CD4-positive, alpha-beta T cell (primary cell): ENCODE measurements at regions of chr18 and their contacts with region 1.

Region 1: GRCh38 chr18:50586710-50587109 is 26.8 kb downstream of the MAPK4 start:
- DNase-seq: no peak
- ATAC-seq: no peak
- H3K4me3 ChIP-seq: no peak overlapping the region
- H3K4me3 Mint-ChIP-seq: no peak overlapping the region
- H3K27ac ChIP-seq: no peak overlapping the region
- H3K27ac Mint-ChIP-seq: no peak overlapping the region
- H3K4me1 ChIP-seq: no peaks in the 10 kb centered on the region
- H3K4me1 Mint-ChIP-seq: no peaks in the 10 kb centered on the region
- H3K27me3 ChIP-seq: no peaks in the 10 kb centered on the region
- H3K27me3 Mint-ChIP-seq: no peaks in the 10 kb centered on the region
- CTCF ChIP-seq: no peak

Region 2: GRCh38 chr18:49608366-49609255 is 978.1 kb before region 1 on chr18:
- CTCF ChIA-PET with region 1: no interaction called
- POLR2A ChIA-PET with region 1: no interaction called
- intact Hi-C with region 1: no loop called
- DNase-seq: no peak
- ATAC-seq: no peak
- H3K4me3 ChIP-seq: no peak overlapping the region
- H3K4me3 Mint-ChIP-seq: no peak overlapping the region
- H3K27ac ChIP-seq: no peak overlapping the region
- H3K27ac Mint-ChIP-seq: no peak overlapping the region
- H3K4me1 ChIP-seq: no peaks in the 10 kb centered on the region
- H3K4me1 Mint-ChIP-seq: no peaks in the 10 kb centered on the region
- H3K27me3 ChIP-seq: peaks cover 0 to 6% of the 10 kb centered on the region in 2 experiments
- H3K27me3 Mint-ChIP-seq: peaks cover 21% of the 10 kb centered on the region
- CTCF ChIP-seq: no peak

Region 3: DNA sequence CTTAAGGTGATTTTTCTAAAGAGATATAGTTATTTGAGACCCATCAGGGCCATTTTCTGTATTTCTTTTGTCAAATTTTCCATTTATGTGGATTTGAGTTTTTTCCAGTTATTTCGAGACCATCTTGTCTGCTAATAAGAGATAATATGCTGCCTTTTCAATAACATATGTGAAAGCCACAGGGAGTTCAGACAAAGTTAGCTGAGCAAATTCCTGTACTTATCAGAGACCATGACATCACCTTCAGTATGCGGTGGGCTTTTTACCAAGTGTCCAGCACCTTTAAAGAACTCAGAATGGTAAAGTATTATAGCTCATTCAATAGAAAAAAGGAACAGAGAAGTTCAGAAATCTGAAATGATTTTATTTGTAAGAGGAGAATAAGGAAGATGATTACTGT is 15.1 kb before region 1 on chr18:
- CTCF ChIA-PET with region 1: no interaction called
- POLR2A ChIA-PET with region 1: no interaction called
- intact Hi-C with region 1: loop called in 1 of 2 experiments (anchors 1 kb)
- DNase-seq: no peak
- ATAC-seq: no peak
- H3K4me3 ChIP-seq: no peak overlapping the region
- H3K4me3 Mint-ChIP-seq: no peak overlapping the region
- H3K27ac ChIP-seq: no peak overlapping the region
- H3K27ac Mint-ChIP-seq: no peak overlapping the region
- H3K4me1 ChIP-seq: no peaks in the 10 kb centered on the region
- H3K4me1 Mint-ChIP-seq: no peaks in the 10 kb centered on the region
- H3K27me3 ChIP-seq: peaks cover 7 to 24% of the 10 kb centered on the region in 2 experiments
- H3K27me3 Mint-ChIP-seq: peaks cover 52% of the 10 kb centered on the region
- CTCF ChIP-seq: no peak

Region 4: GRCh38 chr18:50629148-50629631 is 42.5 kb after region 1 on chr18:
- CTCF ChIA-PET with region 1: no interaction called
- POLR2A ChIA-PET with region 1: no interaction called
- intact Hi-C with region 1: no loop called
- DNase-seq: no peak
- ATAC-seq: no peak
- H3K4me3 ChIP-seq: no peak overlapping the region
- H3K4me3 Mint-ChIP-seq: no peak overlapping the region
- H3K27ac ChIP-seq: no peak overlapping the region
- H3K27ac Mint-ChIP-seq: no peak overlapping the region
- H3K4me1 ChIP-seq: no peaks in the 10 kb centered on the region
- H3K4me1 Mint-ChIP-seq: no peaks in the 10 kb centered on the region
- H3K27me3 ChIP-seq: peaks cover 0 to 1% of the 10 kb centered on the region in 2 experiments
- H3K27me3 Mint-ChIP-seq: no peaks in the 10 kb centered on the region
- CTCF ChIP-seq: no peak